Lower leg skin (tissue), 4 donors: ENCODE measurements at regions of chr19 and their contacts with region 1.

Region 1: GRCh38 chr19:10000171-10000826 is 10.0 kb downstream of the COL5A3 start:
- DNase-seq: peak; percentile 50 to 92
- H3K4me3 ChIP-seq: no peak overlapping the region
- CTCF ChIP-seq: peak in 1 of 3 donors; percentile 60
- POLR2A ChIP-seq: no peak

Region 2: GRCh38 chr19:10043286-10043927 is 43.1 kb after region 1 on chr19:
- intact Hi-C with region 1: loop called (anchors 10 kb)
- DNase-seq: no peak
- H3K4me3 ChIP-seq: no peak overlapping the region
- CTCF ChIP-seq: no peak
- POLR2A ChIP-seq: no peak